Caco-2 (cell line): ENCODE measurements at regions of chr3 and their contacts with region 1.

Region 1: GRCh38 chr3:179768080-179768479 is 115.2 kb downstream of the USP13 start:
- DNase-seq: peak; percentile 45 to 63
- H3K4me3 ChIP-seq: no peak overlapping the region
- H3K4me3 Mint-ChIP-seq: no peak overlapping the region
- H3K27ac Mint-ChIP-seq: no peak overlapping the region
- H3K4me1 ChIP-seq: no peaks in the 10 kb centered on the region
- H3K4me1 Mint-ChIP-seq: no peaks in the 10 kb centered on the region
- H3K27me3 ChIP-seq: no peaks in the 10 kb centered on the region
- H3K27me3 Mint-ChIP-seq: no peaks in the 10 kb centered on the region
- CTCF ChIP-seq: peak; percentile 34 to 65

Region 2: GRCh38 chr3:179726075-179726699 is 41.9 kb before region 1 on chr3:
- CTCF ChIA-PET with region 1: no interaction called
- POLR2A ChIA-PET with region 1: no interaction called
- intact Hi-C with region 1: no loop called
- DNase-seq: no peak
- H3K4me3 ChIP-seq: no peak overlapping the region
- H3K4me3 Mint-ChIP-seq: no peak overlapping the region
- H3K27ac Mint-ChIP-seq: no peak overlapping the region
- H3K4me1 ChIP-seq: no peaks in the 10 kb centered on the region
- H3K4me1 Mint-ChIP-seq: no peaks in the 10 kb centered on the region
- H3K27me3 ChIP-seq: no peaks in the 10 kb centered on the region
- H3K27me3 Mint-ChIP-seq: no peaks in the 10 kb centered on the region
- CTCF ChIP-seq: no peak

Region 3: GRCh38 chr3:179837374-179837773 is 69.3 kb after region 1 on chr3:
- CTCF ChIA-PET with region 1: interaction called, 4 read pairs
- POLR2A ChIA-PET with region 1: no interaction called
- intact Hi-C with region 1: loop called (anchors 2 kb)
- DNase-seq: peak in 1 of 2 experiments; percentile 7
- H3K4me3 ChIP-seq: no peak overlapping the region
- H3K4me3 Mint-ChIP-seq: no peak overlapping the region
- H3K27ac Mint-ChIP-seq: no peak overlapping the region
- H3K4me1 ChIP-seq: no peaks in the 10 kb centered on the region
- H3K4me1 Mint-ChIP-seq: no peaks in the 10 kb centered on the region
- H3K27me3 ChIP-seq: no peaks in the 10 kb centered on the region; the same call in 1 of the 2 replicates
- H3K27me3 Mint-ChIP-seq: peaks cover 3% of the 10 kb centered on the region
- CTCF ChIP-seq: peak in 1 of 2 experiments; percentile 11

Region 4: GRCh38 chr3:179852142-179852905 is 84.2 kb after region 1 on chr3:
- CTCF ChIA-PET with region 1: interaction called, 4 read pairs
- POLR2A ChIA-PET with region 1: no interaction called
- intact Hi-C with region 1: loop called (anchors 1 kb)
- DNase-seq: peak in 1 of 2 experiments; percentile 7
- H3K4me3 ChIP-seq: no peak overlapping the region
- H3K4me3 Mint-ChIP-seq: no peak overlapping the region
- H3K27ac Mint-ChIP-seq: no peak overlapping the region
- H3K4me1 ChIP-seq: no peaks in the 10 kb centered on the region
- H3K4me1 Mint-ChIP-seq: no peaks in the 10 kb centered on the region
- H3K27me3 ChIP-seq: no peaks in the 10 kb centered on the region
- H3K27me3 Mint-ChIP-seq: peaks cover 7% of the 10 kb centered on the region
- CTCF ChIP-seq: peak in 1 of 2 experiments; percentile 33

Region 5: GRCh38 chr3:179929091-179929529 is 161.0 kb after region 1 on chr3:
- CTCF ChIA-PET with region 1: interaction called, 3 read pairs
- POLR2A ChIA-PET with region 1: no interaction called
- intact Hi-C with region 1: loop called (anchors 1 kb)
- DNase-seq: peak; percentile 38 to 57
- H3K4me3 ChIP-seq: no peak overlapping the region
- H3K4me3 Mint-ChIP-seq: no peak overlapping the region
- H3K27ac Mint-ChIP-seq: no peak overlapping the region
- H3K4me1 ChIP-seq: no peaks in the 10 kb centered on the region
- H3K4me1 Mint-ChIP-seq: no peaks in the 10 kb centered on the region
- H3K27me3 ChIP-seq: no peaks in the 10 kb centered on the region; the same call in 1 of the 2 replicates
- H3K27me3 Mint-ChIP-seq: peaks cover 19% of the 10 kb centered on the region
- CTCF ChIP-seq: peak; percentile 76 to 85

Region 6: GRCh38 chr3:179942553-179943075 is 174.5 kb after region 1 on chr3:
- CTCF ChIA-PET with region 1: no interaction called
- POLR2A ChIA-PET with region 1: no interaction called
- intact Hi-C with region 1: no loop called
- DNase-seq: no peak
- H3K4me3 ChIP-seq: no peak overlapping the region
- H3K4me3 Mint-ChIP-seq: peak overlapping the region; percentile 56
- H3K27ac Mint-ChIP-seq: no peak overlapping the region
- H3K4me1 ChIP-seq: no peaks in the 10 kb centered on the region
- H3K4me1 Mint-ChIP-seq: no peaks in the 10 kb centered on the region
- H3K27me3 ChIP-seq: no peaks in the 10 kb centered on the region
- H3K27me3 Mint-ChIP-seq: peaks cover 8% of the 10 kb centered on the region
- CTCF ChIP-seq: no peak

Region 7: DNA sequence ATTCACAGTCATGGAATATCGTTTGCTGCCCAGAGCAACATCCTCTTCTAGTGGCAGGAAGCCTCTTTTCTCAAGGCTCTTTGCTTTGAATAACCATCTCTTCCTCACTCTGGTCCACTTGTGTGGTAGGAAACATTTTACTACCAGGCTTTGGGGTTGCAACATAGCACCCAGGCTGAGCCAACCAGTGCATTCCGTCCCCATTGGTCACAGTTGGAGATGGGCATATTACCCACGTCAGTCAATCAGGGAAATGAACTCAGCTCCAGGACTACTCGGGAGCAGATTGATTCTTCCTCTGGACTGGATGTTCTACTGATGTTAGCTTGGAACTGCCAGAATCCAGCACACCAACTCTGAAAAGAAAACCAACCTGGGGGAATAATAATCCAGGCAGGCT is 272.9 kb after region 1 on chr3:
- CTCF ChIA-PET with region 1: no interaction called
- POLR2A ChIA-PET with region 1: no interaction called
- intact Hi-C with region 1: no loop called
- DNase-seq: no peak
- H3K4me3 ChIP-seq: no peak overlapping the region
- H3K4me3 Mint-ChIP-seq: no peak overlapping the region
- H3K27ac Mint-ChIP-seq: no peak overlapping the region
- H3K4me1 ChIP-seq: no peaks in the 10 kb centered on the region
- H3K4me1 Mint-ChIP-seq: no peaks in the 10 kb centered on the region
- H3K27me3 ChIP-seq: no peaks in the 10 kb centered on the region
- H3K27me3 Mint-ChIP-seq: peaks cover 6% of the 10 kb centered on the region
- CTCF ChIP-seq: no peak

Region 8: DNA sequence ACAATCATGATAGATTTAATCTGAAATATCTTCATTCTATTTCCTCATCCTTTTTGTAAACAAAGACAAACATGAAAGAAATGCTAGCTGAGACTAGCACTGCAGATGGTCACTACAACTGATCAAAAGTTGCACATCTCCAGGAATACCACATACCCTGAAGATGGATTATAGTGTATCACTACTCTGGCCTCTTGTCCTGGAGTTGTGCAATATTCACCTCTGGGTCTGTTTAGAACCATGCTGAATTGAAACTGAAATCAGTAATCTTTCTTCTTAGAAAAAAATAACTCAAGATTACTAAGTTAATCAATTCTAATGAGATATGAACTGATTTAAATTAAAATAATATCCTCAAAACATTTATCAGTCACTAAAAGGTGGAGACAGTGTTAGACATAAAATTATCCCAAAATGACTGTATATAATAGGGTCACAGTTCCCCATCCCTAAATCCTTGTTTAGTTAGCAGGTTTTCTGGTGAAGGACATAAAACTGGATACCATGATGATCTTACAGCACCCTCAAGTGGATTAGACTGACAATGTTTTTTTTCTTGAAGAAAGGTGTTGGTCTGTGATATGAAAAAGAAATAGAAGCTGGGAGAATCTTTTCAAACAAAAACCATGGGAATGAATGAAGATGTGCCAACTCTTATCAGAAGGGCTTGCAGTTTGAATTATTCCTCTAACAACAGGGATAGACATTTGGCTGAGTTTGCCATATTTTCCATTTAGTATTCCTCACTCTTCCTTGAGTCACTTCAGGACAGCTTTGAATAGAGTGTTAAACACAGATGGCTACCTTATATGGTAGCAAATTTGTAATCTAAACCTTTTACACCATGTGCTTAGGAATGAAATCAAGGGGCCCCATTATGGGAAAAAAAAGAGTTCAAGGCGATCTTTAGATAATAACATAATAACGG is 826.8 kb after region 1 on chr3:
- CTCF ChIA-PET with region 1: no interaction called
- POLR2A ChIA-PET with region 1: no interaction called
- intact Hi-C with region 1: loop called (anchors 2 kb)
- DNase-seq: peak in 1 of 2 experiments; percentile 14
- H3K4me3 ChIP-seq: no peak overlapping the region
- H3K4me3 Mint-ChIP-seq: no peak overlapping the region
- H3K27ac Mint-ChIP-seq: no peak overlapping the region
- H3K4me1 ChIP-seq: no peaks in the 10 kb centered on the region
- H3K4me1 Mint-ChIP-seq: no peaks in the 10 kb centered on the region
- H3K27me3 ChIP-seq: no peaks in the 10 kb centered on the region
- H3K27me3 Mint-ChIP-seq: peaks cover 3% of the 10 kb centered on the region
- CTCF ChIP-seq: peak in 1 of 2 experiments; percentile 13